Naive thymus-derived CD4-positive, alpha-beta T cell (primary cell): ENCODE measurements at regions of chr6 and their contacts with region 1.

Region 1: GRCh38 chr6:20401205-20402091 is at the start of gene E2F3:
- DNase-seq: peak; percentile 93 to 99 (median 99)
- ATAC-seq: peak; percentile 90
- H3K4me3 ChIP-seq: peak within 1 kb of the TSS; percentile 89
- H3K4me3 Mint-ChIP-seq: peak within 1 kb of the TSS; percentile 90 to 98 (median 93)
- H3K27ac ChIP-seq: peak within 1 kb of the TSS; percentile 75
- H3K27ac Mint-ChIP-seq: peak within 1 kb of the TSS; percentile 74 to 95 (median 83)
- H3K4me1 ChIP-seq: peaks cover 4 to 27% of the 10 kb centered on the region in 2 donors
- H3K4me1 Mint-ChIP-seq: peaks cover 18 to 50% (median 33%) of the 10 kb centered on the region in 7 donors
- H3K27me3 ChIP-seq: no peaks in the 10 kb centered on the region
- H3K27me3 Mint-ChIP-seq: peaks cover 0 to 3% (median 0%) of the 10 kb centered on the region in 5 donors
- total RNA-seq, gene E2F3: 5.1 to 39.2 (median 30.8) TPM

Region 2: GRCh38 chr6:19399406-19399805 is 1002.0 kb before region 1 on chr6:
- CTCF ChIA-PET with region 1: no interaction called
- POLR2A ChIA-PET with region 1: no interaction called
- intact Hi-C with region 1: no loop called
- DNase-seq: no peak
- ATAC-seq: no peak
- H3K4me3 ChIP-seq: no peak overlapping the region
- H3K4me3 Mint-ChIP-seq: no peak overlapping the region
- H3K27ac ChIP-seq: no peak overlapping the region
- H3K27ac Mint-ChIP-seq: no peak overlapping the region
- H3K4me1 ChIP-seq: no peaks in the 10 kb centered on the region
- H3K4me1 Mint-ChIP-seq: no peaks in the 10 kb centered on the region
- H3K27me3 ChIP-seq: no peaks in the 10 kb centered on the region
- H3K27me3 Mint-ChIP-seq: no peaks in the 10 kb centered on the region

Region 3: GRCh38 chr6:19691465-19692167 is 709.8 kb before region 1 on chr6:
- CTCF ChIA-PET with region 1: no interaction called
- POLR2A ChIA-PET with region 1: no interaction called
- intact Hi-C with region 1: no loop called
- DNase-seq: no peak
- ATAC-seq: no peak
- H3K4me3 ChIP-seq: no peak overlapping the region
- H3K4me3 Mint-ChIP-seq: no peak overlapping the region
- H3K27ac ChIP-seq: no peak overlapping the region
- H3K27ac Mint-ChIP-seq: no peak overlapping the region
- H3K4me1 ChIP-seq: no peaks in the 10 kb centered on the region
- H3K4me1 Mint-ChIP-seq: no peaks in the 10 kb centered on the region
- H3K27me3 ChIP-seq: no peaks in the 10 kb centered on the region
- H3K27me3 Mint-ChIP-seq: peaks cover 21 to 34% (median 23%) of the 10 kb centered on the region in 5 donors

Region 4: GRCh38 chr6:20092071-20092566 is 309.3 kb before region 1 on chr6:
- CTCF ChIA-PET with region 1: no interaction called
- POLR2A ChIA-PET with region 1: no interaction called
- intact Hi-C with region 1: loop called (anchors 1 to 5 kb)
- DNase-seq: peak in 5 of 9 donors; percentile 10 to 23 (median 14)
- ATAC-seq: no peak
- H3K4me3 ChIP-seq: no peak overlapping the region
- H3K4me3 Mint-ChIP-seq: no peak overlapping the region
- H3K27ac ChIP-seq: no peak overlapping the region
- H3K27ac Mint-ChIP-seq: no peak overlapping the region
- H3K4me1 ChIP-seq: no peaks in the 10 kb centered on the region
- H3K4me1 Mint-ChIP-seq: no peaks in the 10 kb centered on the region
- H3K27me3 ChIP-seq: no peaks in the 10 kb centered on the region
- H3K27me3 Mint-ChIP-seq: no peaks in the 10 kb centered on the region

Region 5: DNA sequence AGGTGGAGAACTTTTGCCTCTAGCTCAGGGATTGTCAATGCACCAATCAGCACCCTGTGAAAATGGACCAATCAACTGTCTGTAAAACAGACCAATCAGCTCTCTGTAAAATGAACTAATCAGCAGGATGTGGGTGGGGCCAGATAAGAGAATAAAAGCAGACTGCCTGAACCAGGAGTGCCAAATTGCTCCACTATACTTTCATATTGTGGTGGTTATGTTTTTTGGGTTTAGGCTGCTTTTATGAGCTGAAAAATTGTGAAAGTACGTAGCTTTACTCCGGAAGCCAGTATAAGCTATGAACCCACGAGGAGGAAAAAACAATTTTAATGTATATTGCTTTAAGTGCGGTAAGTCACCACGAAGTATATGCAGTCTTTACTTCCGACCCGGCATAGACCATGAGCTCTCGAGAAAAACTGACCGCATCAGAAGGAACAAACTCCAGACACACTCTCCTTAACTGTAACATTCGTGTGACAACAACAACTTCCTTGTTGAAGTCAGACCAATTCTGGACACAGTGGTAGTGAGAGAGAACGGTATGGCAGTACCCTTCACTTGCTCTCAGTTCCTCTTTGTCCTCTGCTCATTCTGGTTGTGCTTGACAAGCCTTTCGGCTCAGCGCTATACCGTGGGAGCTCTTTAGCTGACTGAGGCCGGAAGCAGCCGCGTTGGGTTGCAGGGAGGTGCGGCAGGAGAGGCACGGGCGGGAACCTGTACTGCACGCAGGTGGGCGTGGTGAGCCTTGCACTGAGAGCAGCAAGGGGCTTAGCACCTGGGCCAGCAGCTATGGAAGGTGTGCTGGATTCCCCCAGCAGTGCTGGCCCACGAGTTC is 81.7 kb before region 1 on chr6:
- CTCF ChIA-PET with region 1: interaction called, 28 read pairs
- POLR2A ChIA-PET with region 1: interaction called, 89 read pairs
- intact Hi-C with region 1: loop called (anchors 1 kb)
- DNase-seq: peak; percentile 38 to 89 (median 79)
- ATAC-seq: peak; percentile 90
- H3K4me3 ChIP-seq: peak overlapping the region; percentile 68
- H3K4me3 Mint-ChIP-seq: peak overlapping the region; percentile 77 to 95 (median 90)
- H3K27ac ChIP-seq: peak overlapping the region; percentile 71
- H3K27ac Mint-ChIP-seq: peak overlapping the region; percentile 89 to 99 (median 95)
- H3K4me1 ChIP-seq: peaks cover 5 to 6% of the 10 kb centered on the region in 2 donors
- H3K4me1 Mint-ChIP-seq: peaks cover 5 to 27% (median 18%) of the 10 kb centered on the region in 7 donors
- H3K27me3 ChIP-seq: no peaks in the 10 kb centered on the region
- H3K27me3 Mint-ChIP-seq: peaks cover 0 to 18% (median 0%) of the 10 kb centered on the region in 5 donors

Region 6: DNA sequence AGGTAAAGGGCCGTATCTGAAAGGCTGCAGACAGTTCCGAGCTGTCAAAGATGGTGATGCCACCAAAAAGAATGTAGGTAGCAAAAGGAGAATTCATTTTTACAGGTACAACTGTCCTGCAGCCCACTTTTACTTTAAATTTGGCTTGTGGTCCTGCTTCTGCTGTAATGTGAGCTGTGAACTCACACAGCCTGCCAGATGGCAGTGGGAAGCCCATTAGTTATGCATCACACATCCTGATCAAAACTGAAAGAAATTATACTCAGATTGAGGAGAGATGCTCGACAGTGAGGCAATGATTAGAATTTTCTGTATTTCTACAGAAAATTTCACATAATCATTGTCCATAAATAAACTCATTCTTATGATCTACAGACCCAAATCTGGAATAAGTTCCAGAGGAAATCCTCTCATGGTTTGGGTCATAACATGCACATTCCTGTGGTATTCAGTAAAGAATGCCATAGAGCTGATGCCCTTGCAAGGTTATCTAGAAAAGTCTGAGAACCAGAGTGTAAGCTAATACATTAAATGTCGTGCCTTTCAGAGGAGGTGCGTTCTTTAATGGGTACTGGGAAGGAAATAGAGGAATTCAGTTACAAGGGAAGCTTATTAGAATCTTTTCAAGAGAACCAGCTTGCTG is 23.7 kb before region 1 on chr6:
- CTCF ChIA-PET with region 1: interaction called, 11 read pairs
- POLR2A ChIA-PET with region 1: interaction called, 7 read pairs
- intact Hi-C with region 1: no loop called
- DNase-seq: no peak
- ATAC-seq: peak; percentile 49
- H3K4me3 ChIP-seq: no peak overlapping the region
- H3K4me3 Mint-ChIP-seq: peak overlapping the region in 1 of 10 donors; percentile 40
- H3K27ac ChIP-seq: no peak overlapping the region
- H3K27ac Mint-ChIP-seq: peak overlapping the region in 2 of 9 donors; percentile 63 to 71
- H3K4me1 ChIP-seq: peaks cover 11 to 14% of the 10 kb centered on the region in 2 donors
- H3K4me1 Mint-ChIP-seq: peaks cover 8 to 28% (median 25%) of the 10 kb centered on the region in 7 donors
- H3K27me3 ChIP-seq: no peaks in the 10 kb centered on the region
- H3K27me3 Mint-ChIP-seq: peaks cover 0 to 2% (median 0%) of the 10 kb centered on the region in 5 donors

Region 7: DNA sequence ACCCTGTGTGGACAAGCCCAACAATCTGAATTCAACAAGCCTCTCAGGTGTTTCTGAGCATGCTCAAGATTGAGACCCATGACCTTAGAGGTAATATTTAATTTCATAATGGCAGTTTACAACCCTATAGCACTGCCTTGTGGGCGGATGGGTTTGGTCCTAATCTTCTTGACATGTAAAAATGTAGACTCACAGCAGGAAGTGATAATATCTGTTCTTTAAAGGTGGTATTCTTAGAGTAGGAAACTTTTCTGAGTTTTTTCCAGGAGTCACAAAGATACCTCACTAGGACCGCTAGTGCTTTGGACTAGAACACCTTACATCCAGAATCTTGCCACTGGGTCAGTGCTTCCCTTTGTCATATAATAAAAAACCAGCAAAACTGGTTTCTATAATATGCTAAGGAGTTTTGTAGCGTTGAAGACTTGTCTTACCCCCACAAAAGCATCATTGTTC is 52.8 kb after region 1 on chr6:
- CTCF ChIA-PET with region 1: interaction called, 8 read pairs
- POLR2A ChIA-PET with region 1: interaction called, 3 read pairs
- intact Hi-C with region 1: loop called (anchors 1 to 5 kb)
- DNase-seq: peak in 7 of 9 donors; percentile 4 to 36 (median 18)
- ATAC-seq: peak; percentile 69
- H3K4me3 ChIP-seq: no peak overlapping the region
- H3K4me3 Mint-ChIP-seq: no peak overlapping the region
- H3K27ac ChIP-seq: no peak overlapping the region
- H3K27ac Mint-ChIP-seq: peak overlapping the region in 2 of 9 donors; percentile 6 to 22
- H3K4me1 ChIP-seq: no peaks in the 10 kb centered on the region
- H3K4me1 Mint-ChIP-seq: peaks cover 8 to 37% (median 29%) of the 10 kb centered on the region in 7 donors
- H3K27me3 ChIP-seq: no peaks in the 10 kb centered on the region
- H3K27me3 Mint-ChIP-seq: no peaks in the 10 kb centered on the region

Region 8: DNA sequence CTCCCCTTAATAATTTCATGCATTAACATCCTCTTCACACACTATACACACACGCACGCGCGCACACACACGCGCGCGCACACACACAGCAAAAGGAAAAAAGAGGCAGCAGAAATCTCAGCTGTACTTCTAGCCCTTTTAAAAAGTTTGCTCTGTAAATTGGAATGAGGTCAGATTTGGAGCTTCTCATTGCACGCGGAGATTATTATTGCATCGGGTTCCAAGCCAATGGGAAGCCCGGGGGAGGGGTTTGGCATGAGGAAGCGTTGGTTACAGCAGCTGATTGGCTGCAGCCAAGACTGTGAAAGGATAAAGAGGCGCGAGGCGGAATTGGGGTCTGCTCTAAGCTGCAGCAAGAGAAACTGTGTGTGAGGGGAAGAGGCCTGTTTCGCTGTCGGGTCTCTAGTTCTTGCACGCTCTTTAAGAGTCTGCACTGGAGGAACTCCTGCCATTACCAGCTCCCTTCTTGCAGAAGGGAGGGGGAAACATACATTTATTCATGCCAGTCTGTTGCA is 1192.0 kb after region 1 on chr6 and contains the start of gene SOX4:
- CTCF ChIA-PET with region 1: no interaction called
- POLR2A ChIA-PET with region 1: no interaction called
- intact Hi-C with region 1: loop called in 1 of 2 experiments (anchors 2 kb)
- DNase-seq: peak; percentile 27 to 80 (median 65)
- ATAC-seq: peak; percentile 78
- H3K4me3 ChIP-seq: peak within 1 kb of the TSS; percentile 59
- H3K4me3 Mint-ChIP-seq: peak within 1 kb of the TSS in 6 of 10 donors; percentile 89 to 93 (median 92)
- H3K27ac ChIP-seq: peak within 1 kb of the TSS; percentile 41
- H3K27ac Mint-ChIP-seq: peak within 1 kb of the TSS in 6 of 9 donors; percentile 43 to 87 (median 80)
- H3K4me1 ChIP-seq: peaks cover 18 to 21% of the 10 kb centered on the region in 2 donors
- H3K4me1 Mint-ChIP-seq: peaks cover 12 to 31% (median 27%) of the 10 kb centered on the region in 7 donors
- H3K27me3 ChIP-seq: peaks cover 10 to 28% of the 10 kb centered on the region in 2 donors
- H3K27me3 Mint-ChIP-seq: peaks cover 40 to 51% (median 45%) of the 10 kb centered on the region in 5 donors
- total RNA-seq, gene SOX4: 0.73 to 11.0 (median 1.4) TPM